ENCODE measurements at regions of chr22 and their contacts with region 1.

Region 1: DNA sequence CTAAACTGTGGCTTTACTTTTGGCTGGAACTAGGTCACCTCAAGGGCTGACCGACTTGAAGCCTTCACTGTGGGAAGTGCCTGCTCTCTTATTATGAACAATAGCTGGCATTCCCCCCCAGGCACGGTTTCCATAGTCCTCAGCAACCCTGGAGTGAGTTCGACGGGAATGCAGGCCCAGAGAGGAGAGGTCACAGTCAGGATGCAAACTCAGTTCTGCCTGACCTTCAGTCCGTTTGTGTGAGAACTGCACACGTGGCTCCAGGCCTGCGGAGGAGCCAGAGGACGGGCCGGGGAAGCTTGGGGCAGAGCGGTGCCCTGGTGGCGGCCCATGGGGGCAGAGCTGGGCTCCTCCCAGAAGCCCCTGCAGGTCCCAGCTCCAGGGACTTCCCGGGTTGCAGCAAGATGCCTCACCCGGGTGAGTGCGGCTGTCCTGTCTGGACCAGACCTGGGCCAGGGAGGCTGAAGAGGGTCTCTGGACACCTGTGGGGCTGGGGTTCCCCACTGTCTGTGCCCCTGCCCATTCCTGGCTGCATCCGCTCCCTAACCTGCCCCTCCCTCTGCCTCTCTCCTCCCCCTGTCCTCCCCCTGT is 17.2 kb downstream of the SLC25A18 start:
- DNase-seq: no peak
- ATAC-seq: no peak
- H3K4me3 ChIP-seq: no peak overlapping the region
- H3K4me3 Mint-ChIP-seq: no peak overlapping the region
- H3K27ac ChIP-seq: no peak overlapping the region
- H3K27ac Mint-ChIP-seq: no peak overlapping the region
- H3K4me1 ChIP-seq: no peaks in the 10 kb centered on the region
- H3K4me1 Mint-ChIP-seq: no peaks in the 10 kb centered on the region
- H3K27me3 ChIP-seq: peaks cover 0 to 16% of the 10 kb centered on the region in 2 experiments
- H3K27me3 Mint-ChIP-seq: no peaks in the 10 kb centered on the region

Region 2: DNA sequence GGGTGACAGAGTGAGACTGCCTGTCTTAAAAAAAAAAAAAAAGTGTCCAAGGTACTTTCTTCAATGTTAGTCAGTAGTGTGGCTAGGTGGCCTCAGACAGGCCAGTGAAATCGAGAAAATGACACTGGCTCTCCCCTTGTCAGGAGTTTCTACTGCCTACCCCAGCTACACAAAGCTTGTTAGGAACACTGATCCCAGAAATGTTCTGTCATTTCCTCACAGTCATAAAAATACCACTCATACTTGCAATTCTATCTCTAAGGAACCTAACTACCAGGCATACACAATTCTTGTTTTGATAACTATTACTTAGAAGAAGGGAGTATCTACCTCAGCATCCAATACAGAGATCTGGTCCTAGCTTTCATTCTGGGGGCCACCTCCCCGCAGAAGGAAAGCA is 16.7 kb after region 1 on chr22:
- CTCF ChIA-PET with region 1: no interaction called
- POLR2A ChIA-PET with region 1: interaction called in 1 of 2 experiments, 12 read pairs
- DNase-seq: no peak
- ATAC-seq: no peak
- H3K4me3 ChIP-seq: no peak overlapping the region
- H3K4me3 Mint-ChIP-seq: no peak overlapping the region
- H3K27ac ChIP-seq: no peak overlapping the region
- H3K27ac Mint-ChIP-seq: no peak overlapping the region
- H3K4me1 ChIP-seq: no peaks in the 10 kb centered on the region
- H3K4me1 Mint-ChIP-seq: peaks cover 0 to 9% (median 6%) of the 10 kb centered on the region in 3 donors
- H3K27me3 ChIP-seq: no peaks in the 10 kb centered on the region
- H3K27me3 Mint-ChIP-seq: no peaks in the 10 kb centered on the region

Measured in T-cell (primary cell).